ENCODE measurements at regions of chr1 and their contacts with region 1.

Region 1: GRCh38 chr1:46179138-46180081 is 3.1 kb upstream of the P3R3URF start:
- DNase-seq: peak; percentile 87 to 88
- H3K4me3 ChIP-seq: no peak overlapping the region
- H3K27ac ChIP-seq: peak overlapping the region in 1 of 3 donors; percentile 96
- H3K4me1 ChIP-seq: peaks cover 44 to 63% of the 10 kb centered on the region in 2 donors
- H3K27me3 ChIP-seq: no peaks in the 10 kb centered on the region
- CTCF ChIP-seq: peak; percentile 57 to 100 (median 94)
- POLR2A ChIP-seq: no peak

Region 2: DNA sequence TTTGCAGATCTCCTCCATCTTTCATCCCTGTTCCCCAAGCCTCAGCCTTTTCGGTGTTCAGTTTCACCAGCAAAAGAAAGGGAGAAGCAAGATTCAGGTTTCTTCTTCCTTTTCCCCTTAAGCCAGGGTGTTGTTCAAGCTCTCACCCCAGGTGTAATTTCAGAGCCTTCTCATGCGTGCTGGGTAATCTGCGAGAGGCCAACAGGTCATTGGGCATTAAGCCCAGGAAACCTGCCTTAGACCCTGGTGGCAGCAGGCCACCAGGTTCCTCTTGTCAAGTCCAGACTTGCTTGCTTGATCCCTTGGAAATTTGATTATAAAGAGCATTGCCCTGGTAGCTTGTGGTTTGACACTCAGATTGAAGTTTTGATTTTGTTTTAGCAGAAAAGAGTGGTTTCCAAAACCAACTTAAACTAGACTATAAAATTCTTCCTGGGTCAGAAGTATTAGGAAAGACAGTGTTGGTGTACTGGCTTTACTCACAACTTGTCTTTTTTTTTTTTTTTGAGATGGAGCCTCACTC is 621.9 kb before region 1 on chr1:
- intact Hi-C with region 1: no loop called
- DNase-seq: peak; percentile 43 to 44
- H3K4me3 ChIP-seq: no peak overlapping the region
- H3K27ac ChIP-seq: peak overlapping the region in 2 of 3 donors; percentile 11 to 28
- H3K4me1 ChIP-seq: peaks cover 5 to 9% of the 10 kb centered on the region in 2 donors
- H3K27me3 ChIP-seq: no peaks in the 10 kb centered on the region
- CTCF ChIP-seq: no peak
- POLR2A ChIP-seq: no peak

Region 3: GRCh38 chr1:46036894-46037839 is 142.2 kb before region 1 on chr1:
- intact Hi-C with region 1: loop called (anchors 2 kb)
- DNase-seq: peak; percentile 89 to 90
- H3K4me3 ChIP-seq: no peak overlapping the region
- H3K27ac ChIP-seq: no peak overlapping the region
- H3K4me1 ChIP-seq: peaks cover 23 to 54% of the 10 kb centered on the region in 2 donors
- H3K27me3 ChIP-seq: no peaks in the 10 kb centered on the region
- CTCF ChIP-seq: peak; percentile 90 to 97 (median 96)
- POLR2A ChIP-seq: no peak

Region 4: DNA sequence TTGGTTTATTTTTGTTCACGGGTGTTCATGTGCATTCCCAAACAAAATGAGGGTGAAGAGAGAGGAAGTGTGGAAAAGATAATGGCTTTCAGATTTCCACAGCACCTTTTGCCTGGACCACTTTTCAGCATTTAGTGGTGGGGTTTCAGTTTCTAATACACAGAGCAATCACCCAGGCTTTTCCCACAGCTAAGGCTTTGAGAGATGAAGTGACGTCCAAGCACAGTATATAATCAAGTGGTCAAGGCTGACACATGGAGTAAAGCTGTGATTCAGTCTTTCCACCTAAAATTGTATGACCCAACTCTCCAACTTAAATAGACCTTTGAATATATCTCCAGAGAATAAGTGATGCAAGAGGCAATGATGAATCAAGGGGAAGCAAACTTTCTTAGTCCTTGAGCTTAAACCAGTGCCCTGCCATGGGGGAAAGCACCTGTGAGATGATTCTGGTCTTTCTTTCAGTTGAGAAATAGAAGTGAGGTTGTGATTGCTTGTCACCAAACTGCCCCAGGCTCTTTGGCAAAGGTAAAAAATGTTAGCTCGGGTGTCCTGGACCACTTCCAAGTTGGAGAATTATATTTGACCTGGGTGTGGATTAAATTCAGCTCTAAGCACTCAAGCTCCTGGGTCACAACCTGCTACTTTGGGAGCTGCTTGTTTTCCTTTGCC is 44.6 kb before region 1 on chr1:
- intact Hi-C with region 1: loop called (anchors 5 kb)
- DNase-seq: peak; percentile 67 to 71
- H3K4me3 ChIP-seq: no peak overlapping the region
- H3K27ac ChIP-seq: peak overlapping the region; percentile 65 to 93 (median 72)
- H3K4me1 ChIP-seq: peaks cover 25 to 40% of the 10 kb centered on the region in 2 donors
- H3K27me3 ChIP-seq: no peaks in the 10 kb centered on the region
- CTCF ChIP-seq: no peak
- POLR2A ChIP-seq: no peak

Region 5: GRCh38 chr1:46223472-46223943 is 44.1 kb after region 1 on chr1:
- intact Hi-C with region 1: loop called (anchors 2 kb)
- DNase-seq: peak; percentile 78 to 80
- H3K4me3 ChIP-seq: no peak overlapping the region
- H3K27ac ChIP-seq: no peak overlapping the region
- H3K4me1 ChIP-seq: peaks cover 3 to 5% of the 10 kb centered on the region in 2 donors
- H3K27me3 ChIP-seq: no peaks in the 10 kb centered on the region
- CTCF ChIP-seq: peak; percentile 84 to 98 (median 90)
- POLR2A ChIP-seq: no peak